CD4-positive, alpha-beta memory T cell (primary cell): ENCODE measurements at regions of chr10 and their contacts with region 1.

Region 1: DNA sequence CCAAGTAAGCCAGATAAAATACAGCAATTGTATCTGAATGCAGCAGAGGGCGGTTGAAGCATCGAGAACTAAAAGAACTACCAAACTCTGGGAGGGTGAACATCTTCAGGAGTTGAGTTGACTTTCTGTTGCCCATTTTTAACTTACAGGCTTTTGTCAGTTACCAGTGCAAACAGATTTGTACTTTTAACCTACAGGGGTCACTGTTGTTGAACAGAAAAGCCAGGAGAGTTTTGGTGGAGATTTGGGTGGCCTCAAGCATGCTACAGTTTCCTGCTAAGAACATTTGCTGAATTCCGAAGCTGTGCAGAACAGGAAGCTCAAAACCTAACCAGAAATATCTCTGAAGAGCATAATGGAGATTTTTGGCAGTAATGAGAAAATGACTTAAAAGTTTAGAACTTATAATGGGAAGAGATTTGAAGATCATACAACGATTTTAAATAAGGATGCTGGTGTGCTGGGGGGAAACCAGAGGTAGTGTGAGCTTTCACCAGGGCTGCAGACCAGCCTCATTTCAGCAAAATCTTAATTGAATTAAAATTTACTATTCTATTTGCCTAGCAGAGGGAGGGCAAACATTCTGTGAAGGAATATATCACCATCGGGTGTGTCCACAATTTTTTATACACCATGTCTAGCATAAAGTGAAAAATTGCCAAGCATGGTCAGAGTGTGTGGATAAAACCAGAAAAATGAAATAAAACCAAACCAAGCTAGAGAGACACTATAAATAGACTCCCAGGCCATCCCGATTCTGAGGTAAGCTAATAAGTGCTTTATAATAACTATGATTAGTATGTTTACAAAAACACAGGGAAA is 208.6 kb upstream of the CCDC6 start:
- DNase-seq: peak in 4 of 5 donors; percentile 16 to 28 (median 24)
- H3K4me3 ChIP-seq: no peak overlapping the region
- H3K4me3 Mint-ChIP-seq: no peak overlapping the region
- H3K27ac ChIP-seq: no peak overlapping the region
- H3K27ac Mint-ChIP-seq: no peak overlapping the region
- H3K4me1 ChIP-seq: no peaks in the 10 kb centered on the region
- H3K4me1 Mint-ChIP-seq: no peaks in the 10 kb centered on the region
- H3K27me3 ChIP-seq: no peaks in the 10 kb centered on the region
- H3K27me3 Mint-ChIP-seq: no peaks in the 10 kb centered on the region

Region 2: DNA sequence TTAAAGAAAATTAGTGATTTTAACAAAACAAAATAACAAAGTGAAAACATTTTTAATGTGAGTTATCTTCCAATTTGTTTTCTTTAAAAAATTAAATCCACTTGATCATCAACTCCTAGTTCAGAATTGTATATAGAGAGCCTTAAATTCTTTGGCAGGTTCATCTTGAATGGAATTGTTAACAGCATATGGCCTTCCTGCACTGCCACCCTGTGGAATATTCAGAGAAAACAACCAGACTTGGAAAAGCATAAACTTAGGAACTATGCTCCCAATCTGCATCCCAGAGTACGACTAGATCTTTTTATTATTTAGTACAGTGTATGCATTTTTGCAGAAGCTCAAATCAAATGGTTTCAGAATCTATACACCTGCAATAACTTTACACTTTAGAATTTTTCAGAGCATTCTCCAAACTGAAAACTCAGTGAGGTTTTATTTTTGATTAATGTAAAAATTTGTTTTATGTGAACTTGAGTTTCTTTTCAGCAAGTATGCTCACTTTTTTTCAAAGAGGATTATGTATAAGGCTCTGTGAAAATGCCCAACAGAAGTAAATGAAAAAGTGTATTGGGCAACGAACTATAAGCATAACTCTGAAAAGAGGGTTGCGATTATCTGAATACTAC is 319.6 kb after region 1 on chr10:
- CTCF ChIA-PET with region 1: no interaction called
- POLR2A ChIA-PET with region 1: no interaction called
- intact Hi-C with region 1: loop called (anchors 10 kb)
- DNase-seq: peak in 1 of 5 donors; percentile 2
- H3K4me3 ChIP-seq: no peak overlapping the region
- H3K4me3 Mint-ChIP-seq: no peak overlapping the region
- H3K27ac ChIP-seq: no peak overlapping the region
- H3K27ac Mint-ChIP-seq: no peak overlapping the region
- H3K4me1 ChIP-seq: no peaks in the 10 kb centered on the region
- H3K4me1 Mint-ChIP-seq: peaks cover 0 to 7% (median 4%) of the 10 kb centered on the region in 4 donors
- H3K27me3 ChIP-seq: no peaks in the 10 kb centered on the region
- H3K27me3 Mint-ChIP-seq: no peaks in the 10 kb centered on the region

Region 3: GRCh38 chr10:60883187-60883586 is 768.2 kb after region 1 on chr10:
- CTCF ChIA-PET with region 1: no interaction called
- POLR2A ChIA-PET with region 1: no interaction called
- intact Hi-C with region 1: no loop called
- DNase-seq: no peak
- H3K4me3 ChIP-seq: no peak overlapping the region
- H3K4me3 Mint-ChIP-seq: no peak overlapping the region
- H3K27ac ChIP-seq: no peak overlapping the region
- H3K27ac Mint-ChIP-seq: peak overlapping the region in 1 of 7 donors; percentile 29
- H3K4me1 ChIP-seq: no peaks in the 10 kb centered on the region
- H3K4me1 Mint-ChIP-seq: no peaks in the 10 kb centered on the region
- H3K27me3 ChIP-seq: no peaks in the 10 kb centered on the region
- H3K27me3 Mint-ChIP-seq: peaks cover 5 to 12% of the 10 kb centered on the region in 2 donors